ENCODE measurements at regions of chr1 and their contacts with region 1.

Region 1: GRCh38 chr1:154479764-154480421 is 22.1 kb upstream of the TDRD10 start:
- DNase-seq: peak; percentile 92
- H3K4me3 Mint-ChIP-seq: no peak overlapping the region
- H3K27ac Mint-ChIP-seq: no peak overlapping the region
- H3K4me1 Mint-ChIP-seq: peaks cover 14% of the 10 kb centered on the region
- H3K27me3 Mint-ChIP-seq: peaks cover 11% of the 10 kb centered on the region

Region 2: DNA sequence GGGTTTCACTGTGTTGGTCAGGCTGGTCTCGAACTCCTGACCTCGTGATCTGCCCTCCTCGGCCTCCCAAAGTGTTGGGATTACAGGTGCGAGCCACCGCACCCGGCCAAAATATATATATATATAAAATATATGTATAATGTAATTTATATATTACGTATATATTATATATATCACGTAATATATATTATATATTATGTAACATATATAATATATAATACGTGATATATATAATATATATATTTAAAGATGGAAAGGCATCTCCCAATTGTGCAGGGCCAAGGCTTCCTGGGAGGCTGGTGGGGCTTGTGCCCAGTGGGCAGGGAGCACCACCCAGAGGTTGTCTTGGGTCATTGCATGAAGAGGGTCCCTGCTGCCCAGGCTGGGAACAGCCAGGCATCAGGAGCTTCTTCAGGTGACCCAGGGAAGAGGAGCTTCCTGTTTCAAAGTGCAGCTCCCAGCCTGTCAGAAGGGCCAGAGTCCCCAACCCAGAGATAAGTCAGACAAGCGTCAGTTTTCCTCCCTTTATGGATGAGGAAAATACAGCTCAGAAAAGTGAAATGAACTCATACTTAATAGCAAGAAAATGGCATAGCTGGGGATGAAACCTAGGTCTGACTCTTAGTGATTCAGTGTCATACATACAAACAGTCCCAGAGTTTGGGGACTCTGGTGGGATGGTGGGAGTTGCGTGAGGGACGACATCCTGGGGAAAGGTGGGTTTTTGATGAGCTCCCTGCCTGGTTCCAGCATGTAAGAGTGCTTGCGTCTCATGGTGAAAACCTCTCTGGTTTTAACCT is 66.6 kb after region 1 on chr1:
- intact Hi-C with region 1: loop called (anchors 1 kb)
- DNase-seq: peak; percentile 85
- H3K4me3 Mint-ChIP-seq: no peak overlapping the region
- H3K27ac Mint-ChIP-seq: peak overlapping the region; percentile 31
- H3K4me1 Mint-ChIP-seq: peaks cover 11% of the 10 kb centered on the region
- H3K27me3 Mint-ChIP-seq: peaks cover 5% of the 10 kb centered on the region

Region 3: DNA sequence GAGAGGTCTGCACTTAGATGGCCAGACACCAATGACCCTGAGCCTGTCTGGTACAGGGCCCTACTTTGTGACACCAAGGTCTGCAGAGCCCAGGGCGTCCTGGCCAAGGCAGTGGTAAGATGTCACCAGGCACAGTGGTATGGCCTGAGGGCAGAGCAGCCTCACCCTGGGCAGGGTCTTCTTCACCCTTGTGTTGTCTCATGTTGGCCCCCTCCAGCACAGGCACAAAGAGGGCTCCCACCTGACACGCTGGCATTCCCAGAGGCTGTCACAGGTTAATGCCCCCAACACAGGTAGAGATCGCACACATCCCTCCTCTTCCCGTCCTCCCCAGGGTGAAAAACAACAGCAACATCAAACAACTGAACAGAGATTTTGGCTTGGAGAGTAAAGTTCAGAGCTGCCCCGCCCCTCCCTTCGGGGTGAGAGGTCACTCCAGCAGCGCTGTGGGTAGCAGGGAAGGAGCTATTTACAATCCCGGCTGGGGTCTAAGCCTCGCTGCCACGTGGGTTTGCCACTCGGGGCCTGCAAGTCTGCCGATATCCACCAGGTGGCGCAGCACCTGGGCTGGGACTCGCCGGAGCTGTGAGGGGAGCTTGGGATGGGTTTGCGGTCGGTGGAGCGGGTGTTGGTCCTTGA is 611.3 kb after region 1 on chr1:
- intact Hi-C with region 1: no loop called
- DNase-seq: peak; percentile 95
- H3K4me3 Mint-ChIP-seq: no peak overlapping the region
- H3K27ac Mint-ChIP-seq: peak overlapping the region; percentile 5
- H3K4me1 Mint-ChIP-seq: peaks cover 7% of the 10 kb centered on the region
- H3K27me3 Mint-ChIP-seq: peaks cover 23% of the 10 kb centered on the region

Measured in activated CD4-positive, alpha-beta T cell treated with anti-CD3 and anti-CD28 coated beads, Interleukin-2, amount 10 ng/mL, durations not matched to agents 24 days and 14 days (primary cell).